Posterior vena cava (tissue), 2 donors: ENCODE measurements at regions of chr9 and their contacts with region 1.

Region 1: DNA sequence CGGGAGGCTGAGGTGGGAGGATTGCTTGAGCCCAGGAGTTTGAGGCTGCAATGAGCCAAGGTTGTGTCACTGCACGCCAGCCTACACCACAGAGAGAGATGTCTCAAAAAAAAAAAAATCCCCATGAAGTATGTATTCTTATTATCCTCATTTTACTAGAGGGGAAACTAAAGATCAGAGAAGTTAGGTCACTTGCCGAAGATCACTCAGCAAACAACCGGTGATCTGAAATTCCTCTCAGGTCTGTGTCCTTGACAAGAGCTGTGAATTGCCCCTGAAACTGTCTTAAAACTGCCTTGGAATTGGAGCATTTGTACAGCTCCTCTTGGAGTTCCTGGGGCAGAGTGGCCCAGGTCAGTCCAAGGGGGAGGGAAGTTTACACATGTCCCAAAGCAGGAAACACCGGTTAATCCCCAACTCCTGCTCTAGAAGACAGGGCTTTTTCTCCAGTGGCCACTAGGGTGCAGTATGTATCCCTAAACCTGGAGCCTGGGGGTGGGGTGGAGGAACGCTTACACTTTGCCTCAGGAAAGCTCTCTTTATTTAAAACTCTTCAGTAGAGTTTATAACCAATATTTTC is 27.6 kb downstream of the AQP7 start:
- DNase-seq: peak; percentile 84

Region 2: GRCh38 chr9:33415501-33416038 is 40.8 kb after region 1 on chr9:
- intact Hi-C with region 1: loop called in 1 of 2 experiments (anchors 5 kb)
- DNase-seq: peak; percentile 89

Region 3: DNA sequence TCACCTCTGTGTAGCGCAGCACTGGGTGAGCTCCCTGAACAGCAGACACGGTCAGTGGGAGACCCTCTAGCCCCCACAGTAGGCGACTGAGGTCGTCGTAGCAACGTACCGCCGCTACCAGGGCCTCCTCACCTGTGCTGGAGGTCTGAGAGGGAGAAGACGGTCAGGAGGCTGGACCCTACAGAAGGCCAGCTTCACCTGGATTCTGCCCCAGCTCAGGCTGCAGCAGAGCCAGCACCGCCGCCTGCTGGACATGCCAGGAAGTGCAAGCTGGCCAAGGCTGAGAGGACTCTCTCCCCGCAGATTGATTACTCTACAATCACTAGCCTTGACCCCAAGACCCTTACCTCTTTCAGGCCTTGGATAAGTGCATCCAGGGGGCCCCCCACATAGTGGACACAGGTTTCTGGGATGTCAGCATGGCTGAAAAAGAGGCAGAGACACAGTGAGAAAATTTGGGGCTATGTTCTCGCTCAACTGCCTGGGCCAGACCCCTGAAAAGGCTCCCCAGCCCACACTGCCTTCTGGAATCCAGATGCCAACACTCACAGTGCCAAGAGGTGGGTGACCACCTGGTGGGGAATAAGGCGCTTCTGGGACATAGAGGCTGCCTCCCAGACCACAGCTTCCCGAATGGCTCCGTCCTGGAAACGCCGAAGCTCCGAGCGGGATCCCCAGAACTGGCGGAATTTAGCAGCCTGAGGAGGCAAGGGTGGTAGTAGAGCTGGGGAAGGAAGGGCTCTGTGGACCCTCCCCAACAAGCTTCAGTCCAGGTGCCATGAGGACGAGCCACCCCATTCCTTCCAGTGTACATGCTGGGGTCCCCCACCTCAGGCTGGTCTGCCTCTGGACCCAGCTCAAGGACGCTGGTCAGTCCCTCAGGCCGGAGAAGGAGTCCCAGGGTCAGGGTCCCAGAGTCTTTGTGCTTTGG is 92.1 kb after region 1 on chr9:
- intact Hi-C with region 1: loop called in 1 of 2 experiments (anchors 10 kb)
- DNase-seq: peak; percentile 90